Activated naive CD4-positive, alpha-beta T cell treated with anti-CD3 and anti-CD28 coated beads for 36 hours (primary cell): ENCODE measurements at regions of chr4 and their contacts with region 1.

Region 1: DNA sequence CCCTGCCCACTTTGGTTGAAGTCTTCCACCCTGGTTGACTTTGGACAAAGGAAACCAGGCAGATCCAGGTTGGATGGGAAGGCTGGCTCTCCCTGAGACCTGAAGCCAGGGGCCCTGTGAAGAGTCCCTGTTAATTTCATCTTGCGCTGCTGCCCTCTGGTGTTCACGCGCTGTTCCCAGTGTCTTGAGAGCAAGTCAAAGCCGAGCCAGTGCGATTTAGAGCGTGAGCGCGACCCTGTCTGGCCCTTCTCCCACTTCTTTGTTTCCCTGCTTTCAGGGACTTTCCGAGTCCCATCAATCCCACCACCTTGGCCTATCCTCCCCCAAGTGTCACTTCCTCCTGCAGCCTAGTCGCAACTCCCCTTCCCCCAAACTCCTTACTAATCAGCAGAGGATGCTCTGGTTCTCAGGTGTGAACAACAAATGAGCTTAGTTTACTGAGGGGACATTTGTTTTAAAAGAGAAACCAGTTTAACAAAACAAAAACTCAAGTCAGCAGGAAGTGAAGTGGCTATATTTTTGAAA is 25.8 kb upstream of the CHRNA9 start:
- DNase-seq: peak; percentile 97
- H3K4me3 Mint-ChIP-seq: peak overlapping the region; percentile 71
- H3K27ac Mint-ChIP-seq: peak overlapping the region; percentile 97
- H3K4me1 Mint-ChIP-seq: peaks cover 89% of the 10 kb centered on the region
- H3K27me3 Mint-ChIP-seq: no peaks in the 10 kb centered on the region

Region 2: GRCh38 chr4:39103291-39103690 is 1206.0 kb before region 1 on chr4:
- CTCF ChIA-PET with region 1: no interaction called
- intact Hi-C with region 1: no loop called
- DNase-seq: no peak
- H3K4me3 Mint-ChIP-seq: no peak overlapping the region
- H3K27ac Mint-ChIP-seq: no peak overlapping the region
- H3K4me1 Mint-ChIP-seq: no peaks in the 10 kb centered on the region
- H3K27me3 Mint-ChIP-seq: no peaks in the 10 kb centered on the region

Region 3: DNA sequence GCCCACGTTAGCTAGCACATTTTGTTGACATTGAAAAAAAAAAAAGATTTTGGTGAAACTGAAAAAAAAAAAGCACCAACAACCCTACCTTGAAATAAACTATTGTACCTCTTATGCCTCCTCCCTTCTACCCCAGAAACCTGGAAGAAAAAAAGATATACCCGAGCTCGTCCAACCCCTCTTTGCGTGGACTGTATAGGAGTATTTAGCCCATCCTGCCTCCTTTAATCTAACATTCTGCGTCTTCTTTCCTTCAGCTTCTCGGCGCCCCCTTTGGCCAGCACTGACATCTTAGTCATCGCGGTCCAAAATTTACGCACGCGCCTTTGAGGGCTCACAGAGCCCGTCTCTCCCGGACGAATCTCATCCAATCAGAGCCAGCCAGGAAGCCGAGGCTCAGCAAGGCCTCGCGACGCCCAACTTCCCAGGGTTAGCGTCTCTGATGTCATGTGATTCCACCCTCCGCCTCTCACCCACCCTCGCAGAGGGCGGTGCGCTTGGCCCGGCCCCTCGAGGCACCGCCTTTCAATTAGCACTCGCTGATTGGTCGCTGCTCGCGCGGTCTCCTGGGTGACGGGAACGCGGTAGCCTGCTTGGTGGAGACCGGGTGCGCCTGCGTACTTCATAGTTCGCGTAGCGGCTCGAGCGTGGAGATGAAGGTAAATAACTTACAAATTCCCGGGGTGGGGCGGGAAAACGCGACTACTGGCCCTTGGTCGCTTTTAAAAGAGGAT is 1127.2 kb before region 1 on chr4 and contains the start of gene WDR19:
- CTCF ChIA-PET with region 1: no interaction called
- intact Hi-C with region 1: loop called (anchors 10 kb)
- DNase-seq: peak; percentile 99
- H3K4me3 Mint-ChIP-seq: no peak within 1 kb of the TSS
- H3K27ac Mint-ChIP-seq: no peak within 1 kb of the TSS
- H3K4me1 Mint-ChIP-seq: peaks cover 6% of the 10 kb centered on the region
- H3K27me3 Mint-ChIP-seq: no peaks in the 10 kb centered on the region
- total RNA-seq, gene WDR19: 12.9 to 18.9 TPM

Region 4: DNA sequence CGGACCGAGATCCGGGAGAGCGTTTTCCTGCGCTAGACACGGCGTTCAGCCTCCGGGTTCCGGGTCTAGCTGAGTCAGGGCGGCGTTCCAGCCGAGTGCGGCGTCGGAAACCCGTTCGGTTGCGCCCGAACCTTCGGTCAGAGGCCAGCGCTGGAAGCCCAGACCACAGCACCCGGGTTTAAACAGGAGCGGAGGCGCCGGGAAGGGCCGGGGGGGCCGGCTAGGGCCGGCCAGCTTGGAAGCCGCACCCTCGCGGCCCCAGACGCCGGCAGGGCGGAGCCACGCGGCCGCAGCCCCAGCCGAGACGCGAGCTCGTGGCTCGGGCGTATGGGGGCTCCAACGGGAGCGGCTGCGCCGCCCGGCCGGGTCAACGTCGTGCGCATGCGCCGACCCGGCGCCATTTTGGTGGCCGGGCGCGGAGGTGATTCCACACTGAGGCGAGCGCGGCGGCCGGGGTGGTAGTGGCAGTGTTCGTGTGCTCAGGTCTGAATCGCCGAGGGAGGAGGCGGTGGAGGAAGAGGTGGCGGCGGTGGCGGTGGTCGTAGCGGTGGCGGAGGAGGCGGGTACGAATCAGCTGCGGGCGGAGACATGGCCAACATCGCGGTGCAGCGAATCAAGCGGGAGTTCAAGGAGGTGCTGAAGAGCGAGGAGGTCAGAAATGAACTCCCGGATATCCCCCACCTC is 611.4 kb before region 1 on chr4 and contains the start of gene UBE2K:
- CTCF ChIA-PET with region 1: no interaction called
- intact Hi-C with region 1: loop called (anchors 2 kb)
- DNase-seq: peak; percentile 85
- H3K4me3 Mint-ChIP-seq: peak within 1 kb of the TSS; percentile 98
- H3K27ac Mint-ChIP-seq: peak within 1 kb of the TSS; percentile 98
- H3K4me1 Mint-ChIP-seq: peaks cover 32% of the 10 kb centered on the region
- H3K27me3 Mint-ChIP-seq: no peaks in the 10 kb centered on the region
- total RNA-seq, gene UBE2K: 60.6 to 69.5 TPM

Region 5: DNA sequence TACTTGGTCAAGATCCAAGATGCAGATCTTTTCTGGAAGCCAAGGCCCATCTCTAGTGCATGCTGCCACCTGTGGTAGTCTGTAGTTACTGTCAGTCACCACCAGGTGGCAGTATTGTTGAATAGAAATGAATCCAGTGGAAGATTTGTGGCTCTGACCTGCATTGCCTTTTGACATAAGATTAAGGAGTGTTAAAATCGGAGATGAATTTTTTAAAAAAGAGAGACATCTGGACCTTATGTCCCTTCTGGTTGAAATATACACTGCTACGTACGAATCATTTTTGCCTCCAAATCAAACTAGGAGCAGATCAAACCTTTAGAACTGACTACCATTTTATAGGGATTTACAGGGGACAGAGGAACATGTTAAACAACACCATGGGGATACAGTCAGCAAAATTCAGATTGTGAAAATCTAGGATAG is 159.3 kb before region 1 on chr4:
- CTCF ChIA-PET with region 1: interaction called, 13 read pairs
- intact Hi-C with region 1: loop called (anchors 1 kb)
- DNase-seq: peak; percentile 86
- H3K4me3 Mint-ChIP-seq: no peak overlapping the region
- H3K27ac Mint-ChIP-seq: peak overlapping the region; percentile 70
- H3K4me1 Mint-ChIP-seq: peaks cover 36% of the 10 kb centered on the region
- H3K27me3 Mint-ChIP-seq: no peaks in the 10 kb centered on the region

Region 6: DNA sequence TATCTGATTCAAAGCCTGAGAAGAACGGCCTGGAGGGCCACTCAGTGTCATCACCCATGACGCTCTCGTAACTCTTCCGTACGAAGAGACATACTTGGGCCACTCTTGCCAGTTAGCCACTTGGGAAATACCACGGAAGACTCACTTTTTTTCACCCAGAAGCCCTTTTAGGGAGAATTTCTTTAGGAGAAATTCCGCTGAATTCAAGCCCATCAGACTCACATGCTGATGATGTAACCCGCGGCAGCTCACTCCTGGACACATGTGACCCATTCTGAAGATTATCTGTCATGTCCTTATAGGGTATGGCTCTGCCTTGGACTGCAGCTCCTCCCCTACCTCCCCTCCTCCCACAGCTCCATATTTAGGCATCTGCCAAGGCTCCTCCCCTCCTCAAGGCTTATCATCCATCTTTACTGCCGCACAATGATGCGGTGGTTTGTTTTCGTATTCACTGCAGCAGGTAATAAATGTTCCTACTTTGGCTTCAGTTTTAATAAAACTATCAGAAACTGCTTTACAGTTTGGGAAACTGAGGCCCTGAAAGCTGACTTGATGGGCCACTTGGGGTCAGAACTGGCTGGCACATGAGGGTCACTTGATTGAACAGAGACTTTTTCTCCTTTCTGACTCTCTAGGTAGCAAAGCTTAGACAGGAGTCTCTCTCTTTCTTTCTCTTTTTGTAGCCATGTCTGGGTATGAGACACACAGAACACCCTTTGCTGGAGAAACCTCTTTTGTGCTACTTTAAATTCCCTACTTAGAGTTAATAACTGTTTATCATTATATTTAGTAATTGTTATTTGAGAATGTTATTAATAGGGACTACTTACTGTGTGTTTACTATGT is 70.4 kb before region 1 on chr4:
- CTCF ChIA-PET with region 1: interaction called, 10 read pairs
- intact Hi-C with region 1: loop called (anchors 1 kb)
- DNase-seq: peak; percentile 90
- H3K4me3 Mint-ChIP-seq: peak overlapping the region; percentile 74
- H3K27ac Mint-ChIP-seq: peak overlapping the region; percentile 89
- H3K4me1 Mint-ChIP-seq: peaks cover 91% of the 10 kb centered on the region
- H3K27me3 Mint-ChIP-seq: no peaks in the 10 kb centered on the region

Region 7: GRCh38 chr4:40283968-40284367 is 25.3 kb before region 1 on chr4:
- CTCF ChIA-PET with region 1: interaction called, 18 read pairs
- intact Hi-C with region 1: loop called (anchors 1 kb)
- DNase-seq: peak; percentile 94
- H3K4me3 Mint-ChIP-seq: peak overlapping the region; percentile 19
- H3K27ac Mint-ChIP-seq: peak overlapping the region; percentile 94
- H3K4me1 Mint-ChIP-seq: peaks cover 70% of the 10 kb centered on the region
- H3K27me3 Mint-ChIP-seq: no peaks in the 10 kb centered on the region

Region 8: GRCh38 chr4:40357726-40358125 is 48.4 kb after region 1 on chr4:
- CTCF ChIA-PET with region 1: no interaction called
- intact Hi-C with region 1: no loop called
- DNase-seq: no peak
- H3K4me3 Mint-ChIP-seq: no peak overlapping the region
- H3K27ac Mint-ChIP-seq: no peak overlapping the region
- H3K4me1 Mint-ChIP-seq: no peaks in the 10 kb centered on the region
- H3K27me3 Mint-ChIP-seq: no peaks in the 10 kb centered on the region

Region 9: DNA sequence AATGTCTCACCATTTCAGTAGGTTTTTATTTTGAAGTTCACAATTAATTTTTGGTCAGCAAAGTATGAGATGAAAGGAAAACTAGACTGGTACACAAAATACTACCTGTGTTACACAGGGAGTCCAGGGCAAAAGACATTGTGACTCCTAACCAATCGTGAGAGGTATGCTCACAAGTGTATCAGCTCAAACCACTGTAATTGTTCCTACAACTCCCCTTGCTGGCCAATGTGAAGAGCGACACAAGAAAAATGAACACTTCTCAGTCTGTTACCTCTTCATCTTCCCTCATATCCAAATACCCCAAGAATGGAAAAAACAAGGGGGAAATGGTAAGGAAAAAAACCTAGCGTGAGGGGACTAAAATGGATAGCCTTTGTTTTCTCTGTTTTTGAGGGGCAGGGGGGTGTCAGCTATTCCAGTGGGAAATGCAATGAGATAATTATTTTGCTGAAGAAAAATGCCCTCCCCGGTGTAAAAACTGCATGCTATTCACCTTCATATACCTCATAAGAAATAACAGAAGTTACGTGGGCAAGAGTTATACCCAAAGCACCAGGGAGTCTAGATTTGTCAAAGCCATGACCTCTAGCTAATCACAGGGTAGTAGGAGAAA is 409.8 kb after region 1 on chr4:
- CTCF ChIA-PET with region 1: no interaction called
- intact Hi-C with region 1: loop called (anchors 5 kb)
- DNase-seq: peak; percentile 27
- H3K4me3 Mint-ChIP-seq: no peak overlapping the region
- H3K27ac Mint-ChIP-seq: no peak overlapping the region
- H3K4me1 Mint-ChIP-seq: peaks cover 8% of the 10 kb centered on the region
- H3K27me3 Mint-ChIP-seq: no peaks in the 10 kb centered on the region